Ascending aorta (tissue), 2 donors: ENCODE measurements at regions of chr9 and their contacts with region 1.

Region 1: DNA sequence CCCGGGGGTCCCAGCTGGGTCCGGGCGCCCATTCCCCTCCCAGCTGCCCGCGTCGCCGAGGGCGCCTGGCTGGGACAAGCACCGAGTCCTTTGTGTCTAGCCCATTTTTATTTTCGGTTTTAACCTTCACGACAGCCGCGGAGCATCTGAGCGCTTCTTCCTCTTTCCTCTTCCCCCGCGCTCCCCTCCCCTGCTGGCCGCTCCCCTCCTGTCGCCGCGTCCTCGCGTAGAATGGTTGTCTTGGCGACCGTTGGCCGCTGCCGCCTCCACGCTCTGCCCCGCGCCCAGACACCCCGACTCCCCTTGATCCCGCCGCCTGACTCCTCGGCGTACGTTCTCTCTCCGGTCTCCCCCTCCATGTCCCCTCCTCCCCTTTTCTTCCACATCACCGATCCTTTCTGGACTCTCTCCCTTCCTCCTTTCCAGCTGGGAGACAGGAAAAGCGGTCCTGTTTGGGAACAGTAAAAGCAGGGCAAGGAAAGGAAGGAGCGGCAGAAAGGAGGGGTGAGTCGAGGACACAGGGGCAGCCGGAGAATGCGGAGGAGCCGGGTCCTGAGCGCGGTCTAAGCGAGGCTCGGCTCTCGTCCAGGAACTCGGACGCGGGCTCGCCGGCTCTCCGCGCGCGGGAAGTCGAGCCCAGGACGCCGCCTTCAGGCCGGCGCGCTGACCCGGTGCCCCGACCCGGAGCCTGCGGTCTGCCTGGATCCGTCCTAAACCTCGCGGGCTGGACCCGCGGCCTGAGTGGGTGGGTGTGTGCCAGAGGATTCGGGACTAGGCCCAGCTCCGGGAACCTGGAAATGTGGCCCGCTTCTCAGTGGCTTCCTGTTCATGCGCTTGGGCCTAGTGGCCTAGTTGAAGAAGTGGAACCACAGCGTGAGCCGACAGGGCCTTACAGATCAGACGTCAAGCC is 841 bp downstream of the CDKN2B-AS1 start:
- DNase-seq: peak in 1 of 2 donors; percentile 86
- H3K4me3 ChIP-seq: peak overlapping the region; percentile 60 to 96
- H3K27ac ChIP-seq: peak overlapping the region; percentile 19 to 73
- H3K4me1 ChIP-seq: peaks cover 0 to 5% of the 10 kb centered on the region in 2 donors
- H3K27me3 ChIP-seq: no peaks in the 10 kb centered on the region
- CTCF ChIP-seq: peak in 2 of 3 experiments; percentile 28 to 39

Region 2: GRCh38 chr9:21402386-21403251 is 592.8 kb before region 1 on chr9:
- intact Hi-C with region 1: loop called (anchors 10 kb)
- DNase-seq: no peak
- H3K4me3 ChIP-seq: peak overlapping the region; percentile 39
- H3K27ac ChIP-seq: no peak overlapping the region
- H3K4me1 ChIP-seq: peaks cover 0 to 8% of the 10 kb centered on the region in 2 donors
- H3K27me3 ChIP-seq: no peaks in the 10 kb centered on the region
- CTCF ChIP-seq: no peak